ENCODE measurements at regions of chr15 and their contacts with region 1.

Region 1: DNA sequence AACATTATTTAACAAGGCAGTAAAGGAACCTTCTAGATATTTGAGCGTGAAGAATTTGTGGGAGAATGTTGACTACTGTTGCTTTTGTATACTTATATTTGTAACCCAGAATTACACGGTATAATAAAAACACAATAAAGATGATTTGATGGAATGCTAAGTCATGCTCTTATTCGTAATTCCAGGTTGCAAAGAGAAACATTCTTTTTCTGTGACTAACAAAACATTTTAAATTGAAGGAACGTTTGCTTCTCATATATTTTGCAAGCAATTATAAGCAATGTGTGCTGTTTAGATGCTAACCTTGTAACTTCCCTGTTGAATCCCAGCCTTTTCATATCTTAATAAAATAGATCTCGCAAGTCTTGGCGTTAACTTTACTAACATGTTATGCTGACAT is 124.4 kb upstream of the CGNL1 start:
- DNase-seq: no peak
- H3K4me3 ChIP-seq: no peak overlapping the region
- H3K27ac ChIP-seq: no peak overlapping the region
- H3K4me1 ChIP-seq: no peaks in the 10 kb centered on the region
- H3K27me3 ChIP-seq: no peaks in the 10 kb centered on the region
- CTCF ChIP-seq: no peak

Region 2: DNA sequence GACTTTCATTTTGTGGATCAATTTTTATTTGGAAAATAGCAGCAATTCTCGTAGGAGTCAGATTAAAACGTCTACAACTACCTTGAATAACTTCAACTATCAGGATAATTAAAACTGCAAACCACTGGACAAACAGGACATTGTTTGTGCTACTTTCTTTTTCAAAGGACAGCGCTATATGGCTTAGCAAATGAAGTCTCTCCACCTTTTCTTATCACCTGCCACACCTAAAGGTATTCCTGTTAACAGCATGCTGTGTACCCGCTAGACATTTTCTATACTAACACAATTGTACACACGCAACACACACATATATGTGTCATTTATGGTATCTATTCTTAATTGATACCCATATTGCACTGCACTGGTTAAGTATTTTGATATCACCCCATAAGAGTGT is 806.2 kb before region 1 on chr15:
- CTCF ChIA-PET with region 1: no interaction called
- POLR2A ChIA-PET with region 1: interaction called, 22 read pairs
- intact Hi-C with region 1: no loop called
- DNase-seq: no peak
- H3K4me3 ChIP-seq: no peak overlapping the region
- H3K27ac ChIP-seq: no peak overlapping the region
- H3K4me1 ChIP-seq: no peaks in the 10 kb centered on the region
- H3K27me3 ChIP-seq: no peaks in the 10 kb centered on the region
- CTCF ChIP-seq: no peak

Region 3: GRCh38 chr15:57703387-57703786 is 451.4 kb after region 1 on chr15:
- CTCF ChIA-PET with region 1: no interaction called
- POLR2A ChIA-PET with region 1: no interaction called
- intact Hi-C with region 1: no loop called
- DNase-seq: peak in 1 of 2 experiments; percentile 50
- H3K4me3 ChIP-seq: no peak overlapping the region
- H3K27ac ChIP-seq: no peak overlapping the region
- H3K4me1 ChIP-seq: peaks cover 13% of the 10 kb centered on the region
- H3K27me3 ChIP-seq: no peaks in the 10 kb centered on the region
- CTCF ChIP-seq: no peak

Region 4: DNA sequence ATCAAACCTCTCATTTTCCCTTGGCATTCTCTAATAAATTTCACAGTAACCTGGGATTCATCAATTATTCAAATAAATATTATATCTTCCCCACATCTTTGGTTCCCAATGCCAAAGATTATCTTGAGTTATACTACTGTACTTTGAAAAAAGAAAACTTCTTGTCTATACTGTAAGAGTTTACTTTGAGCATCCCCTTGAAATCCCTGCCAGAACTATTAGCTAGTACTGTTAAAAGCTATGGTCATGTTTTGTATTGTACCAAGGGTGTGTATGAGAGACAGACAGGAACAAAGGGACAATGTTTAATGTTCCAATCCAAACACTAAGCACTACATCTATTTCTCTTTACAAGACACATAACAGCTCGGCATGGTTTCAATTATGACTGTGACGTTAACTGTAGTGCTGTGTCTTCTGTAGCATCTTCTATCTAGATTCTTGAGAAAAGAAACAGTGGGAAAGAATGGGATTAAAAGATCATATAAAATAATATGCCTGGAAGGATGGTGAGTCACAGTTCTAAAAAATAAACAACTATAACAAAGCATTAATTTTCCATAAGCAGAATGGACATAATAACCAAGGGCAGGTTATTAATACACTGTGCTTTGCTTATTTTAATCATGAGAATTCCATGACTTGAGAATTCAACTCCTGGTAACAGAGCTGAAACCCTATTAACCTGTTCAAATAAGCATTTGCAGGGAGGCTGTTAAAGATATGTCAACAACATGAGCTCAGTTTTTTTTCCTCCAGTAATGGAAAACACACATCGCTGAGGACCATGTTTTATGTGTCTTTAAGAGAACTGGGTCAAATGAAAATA is 742.5 kb after region 1 on chr15:
- CTCF ChIA-PET with region 1: no interaction called
- POLR2A ChIA-PET with region 1: no interaction called
- intact Hi-C with region 1: no loop called
- DNase-seq: no peak
- H3K4me3 ChIP-seq: no peak overlapping the region
- H3K27ac ChIP-seq: no peak overlapping the region
- H3K4me1 ChIP-seq: no peaks in the 10 kb centered on the region
- H3K27me3 ChIP-seq: no peaks in the 10 kb centered on the region; the same call in 1 of the 2 replicates
- CTCF ChIP-seq: no peak

Measured in PC-9 (cell line).